ENCODE measurements at regions of chr19 and their contacts with region 1.

Region 1: DNA sequence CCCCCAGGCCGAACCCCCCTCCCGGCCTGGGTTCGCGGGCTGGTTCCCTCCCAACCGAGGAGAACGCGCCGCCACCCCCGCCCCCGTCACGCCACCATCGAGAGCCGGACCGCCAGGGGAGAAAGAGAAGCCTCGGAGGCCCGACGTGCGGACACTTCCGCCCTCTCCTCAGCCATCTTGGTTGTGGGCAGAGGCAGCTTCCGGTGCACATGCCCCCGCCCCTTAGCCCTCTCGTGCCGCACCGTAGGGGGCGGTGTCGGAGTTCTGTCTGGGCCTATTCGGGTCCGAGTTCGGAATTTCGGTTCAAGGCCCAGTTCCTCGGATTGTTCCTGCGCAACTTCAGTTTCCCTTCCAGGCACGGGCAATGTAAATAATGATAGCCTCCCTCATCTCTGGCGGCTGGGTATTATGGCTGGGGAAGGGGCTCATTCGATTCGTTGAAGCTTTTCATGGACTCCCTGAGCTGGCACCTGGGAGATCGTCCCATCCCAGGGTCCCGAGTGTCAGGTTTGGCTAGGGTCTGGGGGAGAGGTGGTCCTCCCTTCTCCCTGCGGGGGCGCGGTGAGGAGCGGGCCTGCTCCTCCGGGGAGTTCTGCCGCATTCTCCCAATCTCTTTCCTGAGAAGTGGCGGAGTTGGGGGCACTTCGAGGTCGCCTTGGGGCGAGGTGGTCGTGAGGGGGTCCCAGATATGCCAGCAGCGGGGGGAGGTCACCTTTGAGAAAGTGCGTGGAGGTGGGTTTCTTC is at the starts of genes IER2 and STX10:
- DNase-seq: no peak
- H3K4me3 ChIP-seq: peak within 1 kb of the TSS; percentile 96
- CTCF ChIP-seq: peak; percentile 68

Region 2: GRCh38 chr19:13162518-13163314 is 12.4 kb after region 1 on chr19:
- CTCF ChIA-PET with region 1: interaction called, 5 read pairs
- POLR2A ChIA-PET with region 1: interaction called, 32 read pairs
- DNase-seq: peak; percentile 87
- H3K4me3 ChIP-seq: peak overlapping the region; percentile 40
- CTCF ChIP-seq: no peak